ENCODE measurements at regions of chr5 and their contacts with region 1.

Region 1: GRCh38 chr5:16626663-16627264 is 10.0 kb upstream of the RETREG1 start:
- DNase-seq: peak; percentile 67
- H3K4me3 Mint-ChIP-seq: peak overlapping the region; percentile 0
- H3K27ac Mint-ChIP-seq: peak overlapping the region; percentile 96
- H3K4me1 Mint-ChIP-seq: peaks cover 58% of the 10 kb centered on the region
- H3K27me3 Mint-ChIP-seq: no peaks in the 10 kb centered on the region

Region 2: GRCh38 chr5:16616536-16617273 is 10.1 kb before region 1 on chr5 and contains the start of gene RETREG1:
- CTCF ChIA-PET with region 1: interaction called, 6 read pairs
- POLR2A ChIA-PET with region 1: interaction called, 11 read pairs
- DNase-seq: peak; percentile 84
- H3K4me3 Mint-ChIP-seq: no peak within 1 kb of the TSS
- H3K27ac Mint-ChIP-seq: peak within 1 kb of the TSS; percentile 97
- H3K4me1 Mint-ChIP-seq: peaks cover 46% of the 10 kb centered on the region
- H3K27me3 Mint-ChIP-seq: no peaks in the 10 kb centered on the region
- total RNA-seq, gene RETREG1: 48.4 to 50.5 TPM

Region 3: GRCh38 chr5:16679863-16680262 is 53.1 kb after region 1 on chr5:
- CTCF ChIA-PET with region 1: no interaction called
- POLR2A ChIA-PET with region 1: no interaction called
- DNase-seq: no peak
- H3K4me3 Mint-ChIP-seq: no peak overlapping the region
- H3K27ac Mint-ChIP-seq: no peak overlapping the region
- H3K4me1 Mint-ChIP-seq: peaks cover 1% of the 10 kb centered on the region
- H3K27me3 Mint-ChIP-seq: no peaks in the 10 kb centered on the region

Measured in activated CD4-positive, alpha-beta T cell treated with anti-CD3 and anti-CD28 coated beads, Interleukin-2, amount 10 ng/mL, durations not matched to agents 7 days and 5 days (primary cell).